Endothelial cell of umbilical vein (primary cell): ENCODE measurements at regions of chr7 and their contacts with region 1.

Region 1: DNA sequence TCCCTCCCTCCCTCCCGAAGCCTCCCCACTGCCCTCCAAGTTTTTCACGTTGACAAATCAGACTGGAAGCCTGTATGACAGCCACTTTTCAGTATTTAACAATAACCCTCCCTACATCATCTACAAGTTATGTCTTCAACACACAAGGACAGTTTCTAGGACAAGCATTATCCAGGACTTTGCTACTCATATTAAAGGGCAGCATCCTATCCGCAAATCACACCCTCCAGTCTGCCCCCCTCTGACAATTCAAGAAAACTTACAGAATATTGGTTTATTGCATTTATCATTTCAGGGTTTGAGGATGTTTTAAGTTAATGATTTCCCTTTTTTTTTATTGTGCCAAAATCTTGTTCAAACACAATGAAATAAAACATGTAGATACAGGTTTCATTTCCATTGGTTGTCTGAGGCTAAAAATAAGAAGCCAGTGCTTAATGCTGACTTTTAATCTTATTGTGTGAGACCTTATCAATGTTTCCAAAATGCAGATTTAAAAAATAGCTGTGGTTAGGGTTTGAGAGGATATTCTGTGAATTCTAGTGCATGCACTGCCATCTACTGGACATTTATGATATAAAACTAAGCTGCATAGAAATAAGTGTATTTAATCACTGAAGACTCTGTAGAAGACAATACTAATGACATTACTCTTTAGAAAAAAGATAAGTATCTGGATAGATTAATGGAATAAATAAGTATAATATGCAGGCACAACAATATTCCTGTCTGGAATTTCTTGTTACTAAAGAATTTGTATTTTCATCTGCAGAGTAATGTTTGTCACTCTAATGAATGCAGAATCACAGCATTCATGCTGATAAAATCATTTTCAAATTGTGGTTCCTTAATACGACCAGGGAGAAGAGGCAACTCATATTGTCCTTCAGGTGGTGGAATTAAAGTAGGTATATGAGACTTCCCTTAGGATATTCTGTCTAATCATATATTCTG is 64.1 kb downstream of the CAV1 start:
- DNase-seq: peak; percentile 85
- H3K4me3 ChIP-seq: no peak overlapping the region
- H3K27ac ChIP-seq: peak overlapping the region; percentile 42
- H3K4me1 ChIP-seq: peaks cover 38% of the 10 kb centered on the region
- H3K27me3 ChIP-seq: no peaks in the 10 kb centered on the region
- CTCF ChIP-seq: peak; percentile 10 to 27
- POLR2A ChIP-seq: no peak

Region 2: DNA sequence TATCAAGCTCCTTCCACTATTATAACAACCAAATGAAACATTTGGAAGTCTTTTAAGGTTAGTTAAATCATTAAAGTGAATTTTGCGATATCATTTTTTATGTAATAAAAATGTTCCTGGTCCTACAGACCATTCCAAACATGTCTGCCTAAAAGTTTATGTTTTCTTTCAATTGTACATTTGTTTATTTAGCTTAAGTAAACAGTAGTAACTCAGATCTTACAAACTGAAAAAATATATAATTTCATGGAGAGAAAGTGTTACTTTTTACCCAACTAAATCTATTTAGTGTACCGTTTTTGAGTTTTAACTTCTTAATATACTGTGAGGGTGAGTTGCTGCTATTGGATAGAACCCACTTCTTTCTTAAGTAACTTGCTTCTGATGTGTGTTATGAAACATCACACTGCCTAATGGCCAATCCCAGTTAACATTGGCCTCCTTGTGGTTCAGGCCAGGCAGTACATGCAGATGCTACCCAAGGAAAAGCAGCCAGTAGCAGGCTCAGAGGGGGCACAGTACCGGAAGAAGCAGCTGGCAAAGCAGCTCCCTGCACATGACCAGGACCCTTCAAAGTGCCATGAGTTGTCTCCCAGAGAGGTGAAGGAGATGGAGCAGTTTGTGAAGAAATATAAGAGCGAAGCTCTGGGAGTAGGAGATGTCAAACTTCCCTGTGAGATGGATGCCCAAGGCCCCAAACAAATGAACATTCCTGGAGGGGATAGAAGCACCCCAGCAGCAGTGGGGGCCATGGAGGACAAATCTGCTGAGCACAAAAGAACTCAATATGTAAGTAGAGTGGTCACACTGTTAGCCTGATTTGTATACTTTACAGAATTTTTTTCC is 339.0 kb before region 1 on chr7:
- CTCF ChIA-PET with region 1: interaction called, 15 read pairs
- POLR2A ChIA-PET with region 1: no interaction called
- dilution Hi-C with region 1: no loop called
- intact Hi-C with region 1: no loop called
- DNase-seq: peak; percentile 69
- H3K4me3 ChIP-seq: no peak overlapping the region
- H3K27ac ChIP-seq: no peak overlapping the region
- H3K4me1 ChIP-seq: no peaks in the 10 kb centered on the region
- H3K27me3 ChIP-seq: no peaks in the 10 kb centered on the region
- CTCF ChIP-seq: peak; percentile 47 to 56
- POLR2A ChIP-seq: no peak

Region 3: GRCh38 chr7:116443101-116443523 is 145.8 kb before region 1 on chr7:
- CTCF ChIA-PET with region 1: interaction called, 11 read pairs
- POLR2A ChIA-PET with region 1: no interaction called
- dilution Hi-C with region 1: no loop called
- intact Hi-C with region 1: no loop called
- DNase-seq: peak; percentile 91
- H3K4me3 ChIP-seq: no peak overlapping the region
- H3K27ac ChIP-seq: peak overlapping the region; percentile 93
- H3K4me1 ChIP-seq: peaks cover 35% of the 10 kb centered on the region
- H3K27me3 ChIP-seq: no peaks in the 10 kb centered on the region
- CTCF ChIP-seq: no peak
- POLR2A ChIP-seq: peak; percentile 50

Region 4: DNA sequence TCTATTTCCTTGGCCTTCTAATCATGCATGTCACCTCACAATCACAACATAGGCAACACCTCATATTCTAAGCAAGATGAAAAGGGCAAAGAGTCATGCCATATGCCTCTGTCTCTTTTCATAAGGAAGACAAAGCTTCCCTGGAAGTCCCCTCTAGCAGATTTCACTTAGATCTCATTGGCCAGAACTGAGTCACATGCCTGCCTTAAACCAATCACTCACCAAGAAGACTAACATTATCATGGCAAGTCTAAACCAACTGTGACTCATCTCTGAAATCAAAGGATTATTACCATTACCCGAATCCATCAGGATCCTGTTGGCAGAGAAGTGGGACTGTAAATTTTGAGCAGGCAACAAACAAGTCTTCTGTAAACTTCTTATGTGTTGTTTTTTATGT is 36.3 kb before region 1 on chr7:
- CTCF ChIA-PET with region 1: interaction called, 14 read pairs
- POLR2A ChIA-PET with region 1: no interaction called
- dilution Hi-C with region 1: no loop called
- intact Hi-C with region 1: no loop called
- DNase-seq: peak; percentile 63
- H3K4me3 ChIP-seq: no peak overlapping the region
- H3K27ac ChIP-seq: no peak overlapping the region
- H3K4me1 ChIP-seq: peaks cover 31% of the 10 kb centered on the region
- H3K27me3 ChIP-seq: no peaks in the 10 kb centered on the region
- CTCF ChIP-seq: no peak
- POLR2A ChIP-seq: no peak

Region 5: DNA sequence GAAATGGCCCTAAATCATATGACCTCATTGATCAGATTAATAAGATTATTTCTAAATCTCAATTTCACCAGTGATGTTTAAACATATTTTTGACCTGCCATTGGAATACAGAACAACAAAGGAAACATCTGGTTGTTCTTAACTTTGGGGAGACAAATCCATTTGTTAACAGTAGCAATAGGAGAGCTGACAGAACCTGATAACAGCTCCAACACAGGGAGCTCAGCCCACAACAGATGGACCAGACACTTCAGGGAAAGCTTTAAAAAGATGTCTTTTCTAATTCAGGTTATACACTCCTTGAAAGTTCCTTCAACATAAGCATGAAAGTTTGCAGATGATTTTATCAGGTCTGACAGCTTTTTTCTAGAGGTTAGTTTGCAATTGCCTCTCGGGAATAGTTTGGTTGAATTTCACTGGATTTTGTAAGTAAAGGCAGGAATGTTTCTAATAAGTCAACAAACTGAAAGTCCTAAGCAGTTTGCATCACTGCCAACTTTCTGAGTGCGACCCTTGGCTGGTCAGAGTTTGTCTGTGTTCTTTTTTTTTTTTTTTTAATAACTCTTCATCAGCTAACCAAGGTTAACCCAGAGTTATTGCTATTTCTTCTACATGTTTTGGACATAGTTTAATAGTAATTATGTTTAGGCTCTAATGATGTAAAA is 76.5 kb after region 1 on chr7:
- CTCF ChIA-PET with region 1: interaction called, 113 read pairs
- POLR2A ChIA-PET with region 1: no interaction called
- dilution Hi-C with region 1: no loop called
- intact Hi-C with region 1: no loop called
- DNase-seq: peak; percentile 56
- H3K4me3 ChIP-seq: no peak overlapping the region
- H3K27ac ChIP-seq: no peak overlapping the region
- H3K4me1 ChIP-seq: no peaks in the 10 kb centered on the region
- H3K27me3 ChIP-seq: no peaks in the 10 kb centered on the region
- CTCF ChIP-seq: no peak
- POLR2A ChIP-seq: no peak

Region 6: DNA sequence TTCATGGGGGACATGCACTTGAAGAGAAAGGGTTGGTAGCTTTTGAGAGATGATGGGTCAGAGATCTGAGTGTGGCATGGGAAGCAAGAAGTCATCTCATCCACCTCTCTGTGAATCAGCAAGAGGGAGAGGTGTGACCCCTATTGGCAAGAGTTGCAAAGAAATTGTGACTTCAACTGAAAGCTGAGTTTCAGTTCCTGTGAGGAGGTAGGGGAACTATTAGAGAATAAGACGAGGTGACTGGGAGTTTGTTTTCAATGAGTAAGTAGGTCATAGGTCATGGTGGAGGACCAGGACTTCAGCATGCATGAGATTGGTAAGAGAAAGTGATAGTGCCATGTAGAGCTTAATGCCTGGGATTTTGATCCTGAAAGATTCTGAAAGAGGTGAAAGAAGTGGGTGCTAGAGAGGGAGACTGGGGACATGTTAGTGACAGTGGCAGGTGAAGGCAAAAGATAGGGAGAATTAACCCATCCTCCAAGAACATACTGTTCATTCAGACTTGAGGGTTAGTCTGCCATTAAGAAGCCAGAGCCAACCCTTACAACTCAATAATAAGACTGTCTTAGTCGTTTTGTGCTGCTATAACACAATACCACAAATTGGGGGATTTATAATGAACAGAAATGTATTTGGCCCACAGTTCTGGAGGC is 198.0 kb after region 1 on chr7:
- CTCF ChIA-PET with region 1: interaction called, 100 read pairs
- POLR2A ChIA-PET with region 1: no interaction called
- dilution Hi-C with region 1: no loop called
- intact Hi-C with region 1: loop called (anchors 1 kb)
- DNase-seq: peak; percentile 76
- H3K4me3 ChIP-seq: no peak overlapping the region
- H3K27ac ChIP-seq: no peak overlapping the region
- H3K4me1 ChIP-seq: peaks cover 7% of the 10 kb centered on the region
- H3K27me3 ChIP-seq: no peaks in the 10 kb centered on the region
- CTCF ChIP-seq: peak; percentile 33 to 45
- POLR2A ChIP-seq: no peak

Region 7: GRCh38 chr7:117169907-117170306 is 581.0 kb after region 1 on chr7:
- CTCF ChIA-PET with region 1: no interaction called
- POLR2A ChIA-PET with region 1: no interaction called
- dilution Hi-C with region 1: no loop called
- intact Hi-C with region 1: no loop called
- DNase-seq: peak; percentile 85
- H3K4me3 ChIP-seq: no peak overlapping the region
- H3K27ac ChIP-seq: peak overlapping the region; percentile 36
- H3K4me1 ChIP-seq: peaks cover 12% of the 10 kb centered on the region
- H3K27me3 ChIP-seq: no peaks in the 10 kb centered on the region
- CTCF ChIP-seq: no peak
- POLR2A ChIP-seq: no peak